CD8-positive, alpha-beta T cell (primary cell): ENCODE measurements at regions of chr12 and their contacts with region 1.

Region 1: GRCh38 chr12:54379401-54380201 is 4.9 kb downstream of the ZNF385A start:
- DNase-seq: peak; percentile 78 to 92 (median 89)
- ATAC-seq: peak; percentile 100
- H3K4me3 ChIP-seq: peak overlapping the region; percentile 30 to 45
- H3K4me3 Mint-ChIP-seq: peak overlapping the region; percentile 71
- H3K27ac ChIP-seq: no peak overlapping the region
- H3K27ac Mint-ChIP-seq: no peak overlapping the region
- H3K4me1 ChIP-seq: no peaks in the 10 kb centered on the region
- H3K4me1 Mint-ChIP-seq: peaks cover 8% of the 10 kb centered on the region
- H3K27me3 ChIP-seq: no peaks in the 10 kb centered on the region
- H3K27me3 Mint-ChIP-seq: no peaks in the 10 kb centered on the region
- CTCF ChIP-seq: peak; percentile 100

Region 2: DNA sequence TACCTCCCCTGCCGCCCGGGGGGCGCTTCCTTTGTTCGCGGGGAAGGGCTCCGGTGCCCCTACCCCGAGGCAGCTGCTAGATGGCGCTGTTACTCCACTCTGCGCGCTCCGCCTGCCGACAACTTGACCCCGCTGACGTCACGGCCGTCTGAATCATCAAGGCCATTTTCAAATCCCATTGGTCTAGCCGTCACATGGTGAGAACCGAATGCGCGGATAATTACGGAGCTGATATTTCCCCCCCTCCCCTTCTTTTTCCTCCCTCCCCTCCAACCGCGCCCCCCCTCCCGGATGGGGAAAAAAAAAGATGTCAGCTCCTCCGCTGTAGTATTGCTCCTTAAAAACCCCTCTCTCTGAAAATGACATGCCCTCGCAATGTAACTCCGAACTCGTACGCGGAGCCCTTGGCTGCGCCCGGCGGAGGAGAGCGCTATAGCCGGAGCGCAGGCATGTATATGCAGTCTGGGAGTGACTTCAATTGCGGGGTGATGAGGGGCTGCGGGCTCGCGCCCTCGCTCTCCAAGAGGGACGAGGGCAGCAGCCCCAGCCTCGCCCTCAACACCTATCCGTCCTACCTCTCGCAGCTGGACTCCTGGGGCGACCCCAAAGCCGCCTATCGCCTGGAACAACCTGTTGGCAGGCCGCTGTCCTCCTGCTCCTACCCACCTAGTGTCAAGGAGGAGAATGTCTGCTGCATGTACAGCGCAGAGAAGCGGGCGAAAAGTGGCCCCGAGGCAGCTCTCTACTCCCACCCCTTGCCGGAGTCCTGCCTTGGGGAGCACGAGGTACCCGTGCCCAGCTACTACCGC is 394.5 kb before region 1 on chr12 and contains the start of gene HOXC10:
- CTCF ChIA-PET with region 1: no interaction called
- POLR2A ChIA-PET with region 1: no interaction called
- intact Hi-C with region 1: loop called in 1 of 2 experiments (anchors 10 kb)
- DNase-seq: peak; percentile 26 to 86 (median 72)
- ATAC-seq: peak; percentile 66
- H3K4me3 ChIP-seq: no peak within 1 kb of the TSS
- H3K4me3 Mint-ChIP-seq: peak within 1 kb of the TSS; percentile 49
- H3K27ac ChIP-seq: no peak within 1 kb of the TSS
- H3K27ac Mint-ChIP-seq: no peak within 1 kb of the TSS
- H3K4me1 ChIP-seq: peaks cover 27% of the 10 kb centered on the region
- H3K4me1 Mint-ChIP-seq: peaks cover 36% of the 10 kb centered on the region
- H3K27me3 ChIP-seq: peaks cover 75 to 85% of the 10 kb centered on the region in 2 experiments
- H3K27me3 Mint-ChIP-seq: peaks cover 90% of the 10 kb centered on the region
- CTCF ChIP-seq: peak; percentile 44
- total RNA-seq, gene HOXC10: not detected

Region 3: DNA sequence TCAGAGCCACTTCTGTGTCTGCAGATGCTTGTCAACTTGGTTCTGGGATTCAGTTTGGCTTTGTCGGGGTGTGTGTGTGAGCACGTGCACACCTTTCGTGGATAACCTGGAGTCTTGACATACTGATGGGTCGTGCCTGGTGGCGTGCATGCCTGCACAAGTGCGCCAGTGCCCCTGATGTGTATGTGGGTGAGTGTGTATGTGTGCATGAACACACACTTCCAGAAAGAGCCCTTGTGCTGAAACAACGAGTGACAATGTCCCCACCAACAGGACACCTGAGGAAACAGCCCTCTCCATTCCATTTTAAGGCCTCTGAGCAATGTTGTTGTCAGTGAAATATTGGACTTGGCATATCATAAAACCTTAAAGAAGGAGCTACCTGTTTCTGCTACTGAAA is 244.8 kb before region 1 on chr12:
- CTCF ChIA-PET with region 1: no interaction called
- POLR2A ChIA-PET with region 1: no interaction called
- intact Hi-C with region 1: no loop called
- DNase-seq: no peak
- ATAC-seq: no peak
- H3K4me3 ChIP-seq: no peak overlapping the region
- H3K4me3 Mint-ChIP-seq: no peak overlapping the region
- H3K27ac ChIP-seq: no peak overlapping the region
- H3K27ac Mint-ChIP-seq: no peak overlapping the region
- H3K4me1 ChIP-seq: no peaks in the 10 kb centered on the region
- H3K4me1 Mint-ChIP-seq: no peaks in the 10 kb centered on the region
- H3K27me3 ChIP-seq: peaks cover 0 to 14% of the 10 kb centered on the region in 2 experiments
- H3K27me3 Mint-ChIP-seq: peaks cover 26% of the 10 kb centered on the region
- CTCF ChIP-seq: no peak

Region 4: GRCh38 chr12:54182086-54182485 is 197.5 kb before region 1 on chr12:
- CTCF ChIA-PET with region 1: no interaction called
- POLR2A ChIA-PET with region 1: no interaction called
- intact Hi-C with region 1: no loop called
- DNase-seq: no peak
- ATAC-seq: no peak
- H3K4me3 ChIP-seq: no peak overlapping the region
- H3K4me3 Mint-ChIP-seq: no peak overlapping the region
- H3K27ac ChIP-seq: no peak overlapping the region
- H3K27ac Mint-ChIP-seq: no peak overlapping the region
- H3K4me1 ChIP-seq: no peaks in the 10 kb centered on the region
- H3K4me1 Mint-ChIP-seq: peaks cover 12% of the 10 kb centered on the region
- H3K27me3 ChIP-seq: no peaks in the 10 kb centered on the region
- H3K27me3 Mint-ChIP-seq: no peaks in the 10 kb centered on the region
- CTCF ChIP-seq: no peak

Region 5: GRCh38 chr12:54220092-54220557 is 159.5 kb before region 1 on chr12:
- CTCF ChIA-PET with region 1: interaction called, 9 read pairs
- POLR2A ChIA-PET with region 1: no interaction called
- intact Hi-C with region 1: loop called in 1 of 2 experiments (anchors 1 kb)
- DNase-seq: peak; percentile 39 to 76 (median 62)
- ATAC-seq: peak; percentile 62
- H3K4me3 ChIP-seq: no peak overlapping the region
- H3K4me3 Mint-ChIP-seq: no peak overlapping the region
- H3K27ac ChIP-seq: no peak overlapping the region
- H3K27ac Mint-ChIP-seq: no peak overlapping the region
- H3K4me1 ChIP-seq: peaks cover 22% of the 10 kb centered on the region
- H3K4me1 Mint-ChIP-seq: peaks cover 26% of the 10 kb centered on the region
- H3K27me3 ChIP-seq: no peaks in the 10 kb centered on the region
- H3K27me3 Mint-ChIP-seq: peaks cover 8% of the 10 kb centered on the region
- CTCF ChIP-seq: peak; percentile 62

Region 6: DNA sequence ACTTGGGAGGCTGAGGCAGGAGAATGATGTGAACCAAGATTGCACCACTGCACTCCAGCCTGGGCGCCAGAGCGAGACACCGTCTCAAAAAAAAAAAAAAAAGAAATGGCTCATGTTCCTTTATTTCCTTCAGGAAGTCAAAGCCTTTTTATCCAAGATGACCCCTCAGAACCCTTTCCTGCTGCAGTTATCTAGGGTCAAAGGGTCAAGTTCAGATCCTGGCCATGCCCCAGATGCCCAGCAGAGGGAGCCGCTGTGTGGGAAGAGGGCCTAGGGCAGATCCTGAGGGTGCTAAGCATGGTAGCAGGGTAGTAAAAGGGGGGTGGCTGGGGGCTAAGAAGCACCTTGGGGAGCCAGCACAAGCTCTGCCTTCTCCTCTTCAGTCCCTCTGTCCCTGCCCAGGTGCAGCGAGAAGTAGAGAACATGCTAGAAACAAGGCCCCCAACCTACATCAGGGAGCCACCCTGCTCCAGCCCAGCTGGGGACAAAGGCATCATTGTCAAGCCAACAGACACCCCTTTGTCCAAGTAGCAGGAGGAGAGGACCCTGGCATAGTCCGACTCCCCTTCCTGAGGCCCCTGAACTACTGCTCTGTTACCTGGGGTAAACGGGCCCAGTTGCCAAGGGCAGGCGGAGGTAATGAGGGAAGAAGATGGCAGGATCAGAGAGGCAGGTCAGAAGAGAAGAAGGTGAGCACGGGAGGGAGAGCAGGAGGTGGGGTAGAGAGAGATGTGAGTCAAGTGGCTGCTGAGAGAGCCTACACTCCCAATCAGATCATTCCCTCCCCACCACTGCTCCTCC is 85.2 kb before region 1 on chr12:
- CTCF ChIA-PET with region 1: interaction called, 38 read pairs
- POLR2A ChIA-PET with region 1: no interaction called
- intact Hi-C with region 1: no loop called
- DNase-seq: peak in 8 of 9 experiments; percentile 38 to 72 (median 56)
- ATAC-seq: peak; percentile 77
- H3K4me3 ChIP-seq: no peak overlapping the region
- H3K4me3 Mint-ChIP-seq: no peak overlapping the region
- H3K27ac ChIP-seq: no peak overlapping the region
- H3K27ac Mint-ChIP-seq: no peak overlapping the region
- H3K4me1 ChIP-seq: peaks cover 3% of the 10 kb centered on the region
- H3K4me1 Mint-ChIP-seq: peaks cover 7% of the 10 kb centered on the region
- H3K27me3 ChIP-seq: peaks cover 0 to 2% of the 10 kb centered on the region in 2 experiments
- H3K27me3 Mint-ChIP-seq: peaks cover 13% of the 10 kb centered on the region
- CTCF ChIP-seq: peak; percentile 53

Region 7: GRCh38 chr12:54359033-54359761 is 20.4 kb before region 1 on chr12:
- CTCF ChIA-PET with region 1: interaction called, 59 read pairs
- POLR2A ChIA-PET with region 1: interaction called, 3 read pairs
- intact Hi-C with region 1: no loop called
- DNase-seq: peak; percentile 83 to 99 (median 91)
- ATAC-seq: peak; percentile 91
- H3K4me3 ChIP-seq: peak overlapping the region; percentile 77 to 97
- H3K4me3 Mint-ChIP-seq: no peak overlapping the region
- H3K27ac ChIP-seq: peak overlapping the region; percentile 60 to 84
- H3K27ac Mint-ChIP-seq: no peak overlapping the region
- H3K4me1 ChIP-seq: peaks cover 23% of the 10 kb centered on the region
- H3K4me1 Mint-ChIP-seq: peaks cover 16% of the 10 kb centered on the region
- H3K27me3 ChIP-seq: no peaks in the 10 kb centered on the region
- H3K27me3 Mint-ChIP-seq: no peaks in the 10 kb centered on the region
- CTCF ChIP-seq: no peak

Region 8: DNA sequence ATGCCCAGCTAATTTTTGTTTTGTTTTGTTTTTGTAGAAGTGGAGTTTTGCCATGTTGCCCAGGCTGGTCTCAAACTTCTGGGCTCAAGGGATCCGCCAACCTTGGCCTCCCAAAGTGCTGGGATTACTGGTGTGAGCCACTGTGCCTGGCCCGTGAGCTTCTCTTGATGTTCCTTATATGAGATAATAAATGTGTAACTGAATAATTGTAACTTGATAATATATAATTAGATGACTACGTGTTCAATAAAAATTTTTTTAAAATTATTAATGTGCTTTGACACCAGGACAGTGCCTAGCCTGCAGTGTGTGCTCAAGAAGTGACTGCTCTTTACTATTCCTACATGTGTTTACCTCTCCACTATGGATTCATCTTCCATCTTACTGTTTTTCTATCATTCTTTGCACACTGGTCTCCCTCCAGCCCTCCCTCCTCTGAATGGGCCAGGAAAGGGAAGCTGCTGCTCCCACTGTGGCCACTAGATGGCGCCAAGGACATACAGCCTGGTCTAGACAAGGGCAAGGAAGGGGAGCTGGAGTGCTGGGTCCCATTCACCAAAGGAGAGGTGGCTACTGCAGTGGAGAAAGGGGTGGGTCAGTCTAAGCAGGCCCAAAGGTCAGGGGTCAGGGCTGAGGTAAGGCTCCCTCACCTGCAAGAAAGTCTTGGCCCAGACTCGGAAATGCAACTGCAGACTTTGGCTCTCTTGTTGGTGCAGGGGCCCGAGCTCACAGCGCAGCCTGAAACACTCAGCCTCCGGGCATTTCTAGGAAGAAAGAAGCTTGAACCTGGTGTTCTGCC is 19.6 kb after region 1 on chr12:
- CTCF ChIA-PET with region 1: interaction called, 150 read pairs
- POLR2A ChIA-PET with region 1: interaction called, 3 read pairs
- intact Hi-C with region 1: no loop called
- DNase-seq: peak; percentile 82 to 96 (median 88)
- ATAC-seq: peak; percentile 98
- H3K4me3 ChIP-seq: no peak overlapping the region
- H3K4me3 Mint-ChIP-seq: no peak overlapping the region
- H3K27ac ChIP-seq: no peak overlapping the region
- H3K27ac Mint-ChIP-seq: peak overlapping the region; percentile 21
- H3K4me1 ChIP-seq: peaks cover 3% of the 10 kb centered on the region
- H3K4me1 Mint-ChIP-seq: peaks cover 8% of the 10 kb centered on the region
- H3K27me3 ChIP-seq: no peaks in the 10 kb centered on the region
- H3K27me3 Mint-ChIP-seq: no peaks in the 10 kb centered on the region
- CTCF ChIP-seq: peak; percentile 95

Region 9: DNA sequence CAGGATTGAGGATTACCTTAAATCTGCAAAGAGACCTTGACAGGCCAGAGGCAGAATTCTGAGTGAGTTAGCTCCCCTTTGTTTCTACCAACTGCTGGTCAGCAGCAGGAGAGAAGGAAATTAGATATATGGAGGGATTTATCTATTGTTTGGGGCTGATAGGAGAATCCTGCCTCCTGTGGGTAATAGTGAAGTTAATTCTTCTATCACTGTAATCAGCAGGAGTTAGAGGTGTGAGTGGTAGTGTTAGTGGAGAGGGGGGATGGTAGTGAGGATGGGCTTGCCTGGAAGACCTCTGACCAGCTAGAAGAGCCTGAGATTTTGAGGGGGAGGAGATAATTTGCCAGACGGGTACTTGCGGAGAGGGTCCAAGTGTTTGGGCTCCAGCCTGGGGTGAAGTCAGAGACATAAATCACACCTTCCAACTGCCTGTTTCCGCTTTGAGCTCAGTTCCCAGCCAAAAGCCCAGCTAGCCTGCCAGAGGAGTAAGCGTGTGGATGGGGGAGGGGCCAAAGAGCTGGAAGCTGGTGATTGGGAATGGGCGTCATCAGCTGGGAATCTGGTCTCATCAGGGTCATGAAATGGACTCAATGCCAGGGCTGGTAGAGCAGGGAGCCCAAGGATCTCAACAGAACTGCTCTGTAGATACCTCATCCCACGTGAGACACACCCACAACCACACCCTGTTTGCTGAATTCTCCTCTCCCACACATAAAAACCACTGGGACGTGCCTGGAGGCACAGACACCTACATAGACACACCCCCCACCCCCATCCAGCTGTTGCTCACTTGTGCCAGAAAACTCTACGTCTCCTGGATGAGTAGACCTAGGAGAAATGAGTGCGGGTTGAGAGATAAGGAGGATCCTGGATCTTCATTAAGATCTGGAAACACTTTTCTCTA is 52.6 kb after region 1 on chr12:
- CTCF ChIA-PET with region 1: interaction called, 51 read pairs
- POLR2A ChIA-PET with region 1: no interaction called
- intact Hi-C with region 1: no loop called
- DNase-seq: peak in 1 of 9 experiments; percentile 21
- ATAC-seq: no peak
- H3K4me3 ChIP-seq: no peak overlapping the region
- H3K4me3 Mint-ChIP-seq: no peak overlapping the region
- H3K27ac ChIP-seq: no peak overlapping the region
- H3K27ac Mint-ChIP-seq: no peak overlapping the region
- H3K4me1 ChIP-seq: peaks cover 14% of the 10 kb centered on the region
- H3K4me1 Mint-ChIP-seq: peaks cover 44% of the 10 kb centered on the region
- H3K27me3 ChIP-seq: no peaks in the 10 kb centered on the region
- H3K27me3 Mint-ChIP-seq: no peaks in the 10 kb centered on the region
- CTCF ChIP-seq: no peak

Region 10: DNA sequence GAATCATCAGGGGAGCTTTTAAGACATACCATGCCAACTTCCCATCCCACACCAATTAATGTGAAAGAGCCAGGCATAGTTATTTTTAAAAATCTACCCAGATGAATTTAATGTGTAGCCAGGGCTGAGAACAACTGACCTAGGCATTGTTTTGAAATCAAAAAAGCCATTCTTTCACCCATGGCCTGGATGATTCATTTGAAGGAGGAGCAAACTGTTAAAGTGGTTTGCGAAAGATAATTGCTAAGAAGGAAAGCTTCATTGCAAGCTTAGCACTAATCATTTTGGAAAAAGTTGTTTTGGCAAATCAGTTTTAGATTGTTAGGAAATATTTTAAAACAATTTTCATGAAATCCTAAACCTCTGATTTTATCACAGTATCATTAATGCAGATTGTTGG is 95.9 kb after region 1 on chr12:
- CTCF ChIA-PET with region 1: no interaction called
- POLR2A ChIA-PET with region 1: no interaction called
- intact Hi-C with region 1: no loop called
- DNase-seq: no peak
- ATAC-seq: no peak
- H3K4me3 ChIP-seq: no peak overlapping the region
- H3K4me3 Mint-ChIP-seq: no peak overlapping the region
- H3K27ac ChIP-seq: no peak overlapping the region
- H3K27ac Mint-ChIP-seq: no peak overlapping the region
- H3K4me1 ChIP-seq: no peaks in the 10 kb centered on the region
- H3K4me1 Mint-ChIP-seq: peaks cover 4% of the 10 kb centered on the region
- H3K27me3 ChIP-seq: no peaks in the 10 kb centered on the region
- H3K27me3 Mint-ChIP-seq: peaks cover 2% of the 10 kb centered on the region
- CTCF ChIP-seq: no peak